ENCODE measurements at regions of chr1 and their contacts with region 1.

Region 1: DNA sequence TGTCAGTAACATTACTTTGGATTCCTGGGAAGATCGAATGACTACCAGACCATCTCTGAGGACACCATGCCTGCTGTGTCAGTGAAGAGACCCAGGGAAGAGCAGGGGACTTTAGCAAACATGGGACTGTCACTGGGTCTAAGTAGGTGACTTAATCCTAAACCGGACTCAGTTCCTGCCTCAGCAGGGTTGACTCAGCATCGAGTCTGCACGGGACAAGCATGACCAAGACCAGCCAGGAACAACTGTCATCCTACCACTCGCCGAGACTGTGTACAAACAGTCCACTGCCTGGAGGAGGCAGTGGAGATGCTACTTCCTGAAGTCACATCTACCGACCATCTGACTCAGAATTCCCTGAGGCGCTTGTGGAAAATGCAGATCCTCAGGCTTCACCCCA is 53.2 kb upstream of the RAB4A start:
- DNase-seq: no peak
- H3K4me3 ChIP-seq: no peak overlapping the region
- H3K27ac ChIP-seq: no peak overlapping the region
- H3K4me1 ChIP-seq: peaks cover 0 to 7% of the 10 kb centered on the region in 2 donors
- H3K27me3 ChIP-seq: no peaks in the 10 kb centered on the region
- CTCF ChIP-seq: no peak
- POLR2A ChIP-seq: no peak

Region 2: GRCh38 chr1:228219962-228220780 is 997.6 kb before region 1 on chr1:
- intact Hi-C with region 1: loop called (anchors 5 kb)
- DNase-seq: peak in 1 of 2 donors; percentile 8
- H3K4me3 ChIP-seq: no peak overlapping the region
- H3K27ac ChIP-seq: no peak overlapping the region
- H3K4me1 ChIP-seq: no peaks in the 10 kb centered on the region
- H3K27me3 ChIP-seq: no peaks in the 10 kb centered on the region
- CTCF ChIP-seq: no peak
- POLR2A ChIP-seq: no peak

Region 3: DNA sequence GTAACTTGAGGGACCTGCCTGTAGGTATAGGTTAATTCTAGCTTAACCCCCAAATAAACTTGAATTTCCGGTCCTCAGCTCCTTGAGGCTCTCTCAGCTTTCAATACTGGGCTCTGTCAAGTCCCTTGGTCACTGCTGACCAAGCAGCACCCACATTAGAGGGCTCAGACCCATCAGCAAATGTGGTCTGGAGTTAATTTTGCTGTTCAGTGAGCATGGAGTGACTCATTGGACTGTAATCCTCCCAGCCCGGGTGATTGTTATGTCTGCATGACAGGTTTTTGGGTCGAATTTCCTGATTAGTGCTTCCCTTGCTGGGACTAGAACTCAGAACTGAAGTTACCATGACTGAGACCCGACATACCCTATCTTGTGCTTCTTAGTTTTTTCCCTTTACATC is 538.9 kb after region 1 on chr1:
- intact Hi-C with region 1: no loop called
- DNase-seq: no peak
- H3K4me3 ChIP-seq: no peak overlapping the region
- H3K27ac ChIP-seq: no peak overlapping the region
- H3K4me1 ChIP-seq: no peaks in the 10 kb centered on the region
- H3K27me3 ChIP-seq: no peaks in the 10 kb centered on the region
- CTCF ChIP-seq: no peak
- POLR2A ChIP-seq: no peak

Region 4: GRCh38 chr1:230891413-230891812 is 1673.7 kb after region 1 on chr1:
- intact Hi-C with region 1: no loop called
- DNase-seq: no peak
- H3K4me3 ChIP-seq: no peak overlapping the region
- H3K27ac ChIP-seq: no peak overlapping the region
- H3K4me1 ChIP-seq: no peaks in the 10 kb centered on the region
- H3K27me3 ChIP-seq: no peaks in the 10 kb centered on the region
- CTCF ChIP-seq: no peak
- POLR2A ChIP-seq: no peak